Endothelial cell of umbilical vein (primary cell): ENCODE measurements at regions of chr19 and their contacts with region 1.

Region 1: GRCh38 chr19:8005534-8006256 is at the start of gene ELAVL1:
- DNase-seq: peak; percentile 88
- H3K4me3 ChIP-seq: peak within 1 kb of the TSS; percentile 81 to 96 (median 84)
- H3K27ac ChIP-seq: peak within 1 kb of the TSS; percentile 53
- H3K4me1 ChIP-seq: peaks cover 22% of the 10 kb centered on the region
- H3K27me3 ChIP-seq: no peaks in the 10 kb centered on the region
- CTCF ChIP-seq: no peak
- POLR2A ChIP-seq: peak; percentile 67
- total RNA-seq, gene ELAVL1: 124 and 134 TPM in 2 replicates

Region 2: DNA sequence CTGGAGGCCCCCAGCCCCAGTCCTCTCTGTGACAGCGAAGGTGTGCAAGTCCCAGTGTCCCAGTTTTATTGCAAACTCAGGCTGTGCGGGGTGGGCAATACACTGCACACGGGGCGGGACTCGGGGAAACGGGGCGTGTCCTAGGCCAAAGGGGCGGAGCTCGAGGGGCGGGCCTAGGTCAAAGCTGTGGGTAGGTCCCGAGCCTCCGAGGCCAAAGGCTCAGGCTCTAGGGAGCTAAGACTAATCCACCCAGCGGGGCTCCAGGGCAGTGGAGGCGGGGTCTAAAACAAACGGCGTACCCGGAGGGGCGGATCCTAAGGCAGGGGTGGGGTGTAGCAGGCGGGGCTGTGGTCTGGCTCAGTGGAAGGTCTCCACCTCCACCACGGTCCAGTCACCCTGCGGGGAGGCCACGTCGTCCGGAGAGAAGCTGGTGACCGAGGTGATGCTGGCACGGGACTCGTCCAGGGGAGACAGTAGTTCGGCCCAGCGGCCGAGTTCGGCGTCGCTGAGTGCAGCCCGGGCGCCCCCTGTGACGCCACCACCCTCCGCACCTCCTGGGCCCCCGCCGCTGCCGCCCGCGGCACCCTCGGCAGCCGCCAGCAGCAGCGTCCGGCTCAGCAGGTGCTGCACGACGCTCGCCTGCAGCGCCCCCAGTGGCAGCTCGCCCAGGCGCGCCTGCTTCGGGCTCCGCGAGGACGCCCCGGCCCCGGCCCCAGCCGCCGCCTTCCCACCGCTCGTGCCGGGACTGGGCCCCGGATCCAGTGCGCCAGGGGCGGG is 136.8 kb before region 1 on chr19:
- CTCF ChIA-PET with region 1: no interaction called
- POLR2A ChIA-PET with region 1: no interaction called
- dilution Hi-C with region 1: no loop called
- intact Hi-C with region 1: no loop called
- DNase-seq: peak; percentile 65
- H3K4me3 ChIP-seq: peak overlapping the region in 1 of 3 experiments; percentile 14
- H3K27ac ChIP-seq: no peak overlapping the region
- H3K4me1 ChIP-seq: peaks cover 7% of the 10 kb centered on the region
- H3K27me3 ChIP-seq: peaks cover 21 to 24% of the 10 kb centered on the region in 2 experiments
- CTCF ChIP-seq: peak; percentile 66 to 84
- POLR2A ChIP-seq: no peak

Region 3: DNA sequence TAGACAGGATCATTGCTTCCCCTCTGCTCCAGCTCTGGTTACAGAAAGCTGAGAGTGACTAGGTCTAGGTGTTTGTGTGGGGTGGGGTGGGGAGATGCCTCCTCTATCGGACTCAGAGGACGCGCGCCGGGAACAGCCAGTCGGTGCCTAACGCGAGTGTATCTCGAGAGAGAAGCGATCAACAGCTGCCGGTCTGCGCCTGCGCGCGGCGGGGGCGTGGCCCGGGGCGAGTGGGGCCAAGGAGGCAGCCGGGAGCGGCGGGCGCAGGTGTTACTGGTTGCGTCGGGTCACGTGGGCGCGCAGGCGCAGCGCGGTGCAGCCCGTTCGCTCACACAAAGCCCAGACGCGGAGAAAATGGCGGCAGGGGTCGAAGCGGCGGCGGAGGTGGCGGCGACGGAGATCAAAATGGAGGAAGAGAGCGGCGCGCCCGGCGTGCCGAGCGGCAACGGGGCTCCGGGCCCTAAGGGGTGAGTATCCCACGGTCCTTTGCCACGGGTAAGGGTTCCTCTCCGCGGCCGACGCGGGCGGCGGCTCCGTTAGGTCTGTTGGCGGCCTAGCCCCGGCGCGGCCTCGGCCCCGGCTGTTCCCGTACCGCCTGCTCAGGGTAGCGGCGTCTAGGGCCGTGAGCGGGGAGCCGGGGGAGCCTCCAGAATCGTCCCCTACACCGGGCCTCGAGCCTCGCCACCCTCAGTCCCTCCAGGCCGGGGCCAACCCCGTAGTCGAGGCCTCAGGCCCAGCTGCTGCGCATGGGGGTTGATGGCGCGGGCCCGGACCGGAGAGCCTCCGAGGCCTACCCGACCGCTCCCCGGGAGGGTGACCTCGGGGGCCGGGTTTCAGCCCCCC is 439.2 kb after region 1 on chr19 and contains the start of gene HNRNPM:
- CTCF ChIA-PET with region 1: no interaction called
- POLR2A ChIA-PET with region 1: interaction called, 13 read pairs
- dilution Hi-C with region 1: no loop called
- intact Hi-C with region 1: no loop called
- DNase-seq: peak; percentile 99
- H3K4me3 ChIP-seq: peak within 1 kb of the TSS; percentile 81 to 98 (median 84)
- H3K27ac ChIP-seq: peak within 1 kb of the TSS; percentile 93
- H3K4me1 ChIP-seq: peaks cover 25% of the 10 kb centered on the region
- H3K27me3 ChIP-seq: no peaks in the 10 kb centered on the region
- CTCF ChIP-seq: no peak
- POLR2A ChIP-seq: peak; percentile 77
- total RNA-seq, gene HNRNPM: 288 and 301 TPM in 2 replicates